ENCODE measurements at regions of chr22 and their contacts with region 1.

Region 1: DNA sequence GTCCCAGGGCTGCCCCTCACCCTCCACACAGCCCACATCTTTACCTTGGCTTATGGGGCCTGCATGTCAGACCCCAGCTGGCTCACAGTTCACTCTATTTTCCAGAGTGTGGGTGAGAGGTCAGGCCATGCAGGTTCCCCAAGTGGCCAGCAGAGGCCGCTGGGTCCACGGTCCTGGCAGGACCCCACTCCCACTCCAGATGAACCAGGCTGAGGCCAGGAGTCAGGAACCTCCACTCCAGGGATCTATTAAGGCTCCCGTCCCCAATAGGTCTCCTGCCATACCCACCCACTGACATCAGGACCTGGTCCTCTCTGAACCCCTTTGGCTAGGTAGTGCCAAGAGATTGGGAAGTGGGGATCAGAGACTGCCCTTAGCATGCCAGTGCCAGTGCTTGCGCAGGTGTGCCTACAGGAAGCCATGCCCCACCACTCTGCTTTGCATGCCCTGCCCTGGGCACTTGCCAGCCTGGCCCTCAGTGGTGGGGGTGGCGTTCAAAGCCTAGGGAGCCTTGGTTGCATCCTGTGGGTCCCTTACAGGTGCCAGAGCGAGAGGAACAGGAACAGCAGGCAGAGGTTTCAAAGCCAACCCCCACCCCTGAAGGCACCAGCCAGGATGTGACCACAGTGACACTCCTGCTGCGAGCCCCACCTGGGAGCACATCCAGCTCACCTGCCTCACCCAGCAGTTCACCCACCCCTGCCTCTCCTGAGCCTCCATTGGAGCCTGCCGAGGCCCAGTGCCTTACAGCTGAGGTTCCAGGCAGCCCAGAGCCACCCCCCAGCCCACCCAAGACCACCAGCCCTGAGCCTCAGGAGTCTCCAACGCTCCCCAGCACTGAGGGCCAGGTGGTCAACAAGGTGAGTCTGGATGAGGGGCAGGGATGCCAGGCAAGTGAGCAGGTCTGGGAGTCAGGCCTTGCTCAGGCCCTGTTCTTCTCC is 8.3 kb downstream of the SMTN start:
- DNase-seq: peak in 40 of 42 donors; percentile 40 to 88 (median 68)

Region 2: GRCh38 chr22:31055635-31056159 is 33.7 kb before region 1 on chr22:
- intact Hi-C with region 1: no loop called
- DNase-seq: peak in 37 of 42 donors; percentile 5 to 78 (median 34)

Region 3: GRCh38 chr22:31230871-31231621 is 141.6 kb after region 1 on chr22:
- intact Hi-C with region 1: loop called (anchors 10 kb)
- DNase-seq: peak in 37 of 42 donors; percentile 16 to 77 (median 55)

Region 4: GRCh38 chr22:31337161-31337560 is 247.7 kb after region 1 on chr22:
- intact Hi-C with region 1: no loop called
- DNase-seq: no peak

Region 5: GRCh38 chr22:31898926-31899325 is 809.5 kb after region 1 on chr22:
- intact Hi-C with region 1: no loop called
- DNase-seq: peak in 33 of 42 donors; percentile 28 to 75 (median 44)

Measured in head of caudate nucleus (tissue), 42 donors.